ENCODE measurements at regions of chr7 and their contacts with region 1.

Region 1: DNA sequence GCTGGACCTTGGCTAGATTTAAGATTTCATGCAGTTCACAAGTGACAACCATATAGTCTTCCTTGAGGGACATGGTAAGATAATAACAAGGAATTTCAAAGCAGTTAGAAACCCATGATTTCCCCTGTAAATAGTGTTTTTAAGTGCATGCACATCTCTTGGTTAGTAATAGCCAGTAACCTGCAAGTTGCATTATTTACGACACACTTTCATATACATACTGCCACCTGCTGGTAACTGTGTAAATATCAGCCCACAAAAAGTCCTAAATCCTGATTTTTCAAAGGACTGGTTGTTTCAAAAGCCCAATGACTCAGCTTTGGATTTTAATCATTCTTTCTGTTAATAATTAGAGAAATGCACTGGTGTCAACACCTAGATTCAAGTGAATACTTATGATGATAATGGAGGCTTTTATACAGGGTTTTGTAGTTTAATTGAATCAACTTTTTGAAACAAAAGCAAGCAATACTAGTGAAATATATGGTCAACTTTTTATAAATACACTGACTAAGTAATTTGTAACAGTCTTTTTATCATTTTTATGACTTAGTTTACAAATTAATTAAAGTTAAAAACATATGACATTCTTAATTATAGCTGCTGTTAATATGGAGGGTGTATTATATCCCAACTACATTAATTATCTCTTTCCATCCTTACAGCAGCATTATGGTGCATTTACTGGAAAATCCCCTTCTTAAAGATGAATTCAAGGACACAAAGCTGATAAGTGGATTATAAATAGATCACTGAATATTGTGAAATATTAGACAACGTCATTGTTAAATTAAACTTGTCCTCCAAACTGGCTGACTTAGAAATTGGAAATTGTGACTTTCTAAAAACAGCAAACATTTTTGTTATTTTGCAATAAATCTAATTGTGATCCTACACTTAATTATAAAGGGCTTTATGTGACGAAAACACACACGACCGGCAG is 367.7 kb upstream of the SEMA3D start:
- DNase-seq: peak; percentile 37
- H3K4me3 ChIP-seq: no peak overlapping the region
- H3K27ac ChIP-seq: no peak overlapping the region
- H3K4me1 ChIP-seq: no peaks in the 10 kb centered on the region
- H3K27me3 ChIP-seq: no peaks in the 10 kb centered on the region
- CTCF ChIP-seq: peak; percentile 49 to 76 (median 76)
- POLR2A ChIP-seq: no peak

Region 2: DNA sequence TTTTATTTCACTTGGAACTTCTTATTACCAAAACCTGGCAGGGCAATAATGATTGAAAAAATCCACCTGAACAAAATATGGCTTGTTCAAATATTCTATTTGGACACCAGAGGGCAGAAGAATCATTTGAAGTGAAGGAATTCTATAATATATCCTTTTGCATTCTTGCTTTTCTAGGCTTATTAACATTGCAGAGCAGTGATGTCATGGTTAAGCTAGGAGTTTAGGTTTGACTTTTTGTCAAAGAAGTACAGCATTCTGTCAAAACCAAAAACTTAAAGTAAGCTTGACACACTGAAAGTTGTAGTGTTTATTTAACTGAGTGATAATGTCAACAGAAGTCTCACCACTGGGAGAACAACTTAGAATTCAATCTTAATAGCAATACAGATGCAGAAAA is 523.6 kb before region 1 on chr7:
- intact Hi-C with region 1: loop called (anchors 10 kb)
- DNase-seq: no peak
- H3K4me3 ChIP-seq: no peak overlapping the region
- H3K27ac ChIP-seq: no peak overlapping the region
- H3K4me1 ChIP-seq: no peaks in the 10 kb centered on the region
- H3K27me3 ChIP-seq: no peaks in the 10 kb centered on the region
- CTCF ChIP-seq: peak; percentile 34 to 42 (median 36)
- POLR2A ChIP-seq: no peak